AG04449 (cell line): ENCODE measurements at regions of chr11 and their contacts with region 1.

Region 1: DNA sequence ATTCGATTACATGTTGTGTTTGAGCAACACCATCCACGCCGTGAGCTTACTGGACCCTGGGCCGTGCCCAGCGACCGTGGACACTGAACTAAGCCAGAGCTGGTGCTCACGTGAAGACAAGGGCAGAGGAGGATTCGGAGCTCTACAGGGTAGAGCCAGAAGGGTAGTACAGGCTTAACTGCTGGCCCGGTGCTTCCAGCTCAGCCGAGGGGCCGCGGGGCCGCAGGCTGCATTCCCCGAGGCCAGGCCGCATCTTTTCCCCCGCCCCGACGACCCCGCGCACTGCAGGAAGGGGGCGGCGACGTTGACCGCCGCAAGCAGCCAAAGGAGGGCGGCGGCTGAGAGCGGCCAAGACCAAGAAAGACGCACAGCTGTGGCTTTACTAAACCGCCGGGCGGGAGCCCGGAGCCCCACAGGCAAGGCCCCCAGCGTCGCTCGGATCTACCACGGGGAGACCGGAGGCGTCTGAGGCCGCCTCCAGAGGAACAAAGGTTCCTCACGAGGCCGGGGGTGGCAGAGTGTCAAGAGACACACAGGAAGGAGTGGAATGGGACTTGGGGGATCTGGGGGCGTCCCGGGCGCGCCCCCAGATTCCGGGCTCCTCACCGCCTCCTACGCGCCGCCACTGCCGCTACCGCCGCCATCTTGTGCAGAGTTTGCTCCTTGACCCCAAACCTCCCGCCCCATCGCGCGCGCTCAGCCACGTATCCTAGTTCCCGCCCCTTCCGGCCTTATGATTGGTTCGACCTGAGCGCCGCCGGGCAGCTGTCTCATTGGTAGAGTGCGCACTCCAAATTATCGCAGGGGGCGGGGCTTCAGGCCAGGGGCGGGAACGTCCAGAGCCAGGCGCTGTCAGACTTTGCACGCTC is at the start of gene GANAB:
- DNase-seq: peak; percentile 87
- H3K4me3 ChIP-seq: peak within 1 kb of the TSS; percentile 91
- CTCF ChIP-seq: no peak

Region 2: DNA sequence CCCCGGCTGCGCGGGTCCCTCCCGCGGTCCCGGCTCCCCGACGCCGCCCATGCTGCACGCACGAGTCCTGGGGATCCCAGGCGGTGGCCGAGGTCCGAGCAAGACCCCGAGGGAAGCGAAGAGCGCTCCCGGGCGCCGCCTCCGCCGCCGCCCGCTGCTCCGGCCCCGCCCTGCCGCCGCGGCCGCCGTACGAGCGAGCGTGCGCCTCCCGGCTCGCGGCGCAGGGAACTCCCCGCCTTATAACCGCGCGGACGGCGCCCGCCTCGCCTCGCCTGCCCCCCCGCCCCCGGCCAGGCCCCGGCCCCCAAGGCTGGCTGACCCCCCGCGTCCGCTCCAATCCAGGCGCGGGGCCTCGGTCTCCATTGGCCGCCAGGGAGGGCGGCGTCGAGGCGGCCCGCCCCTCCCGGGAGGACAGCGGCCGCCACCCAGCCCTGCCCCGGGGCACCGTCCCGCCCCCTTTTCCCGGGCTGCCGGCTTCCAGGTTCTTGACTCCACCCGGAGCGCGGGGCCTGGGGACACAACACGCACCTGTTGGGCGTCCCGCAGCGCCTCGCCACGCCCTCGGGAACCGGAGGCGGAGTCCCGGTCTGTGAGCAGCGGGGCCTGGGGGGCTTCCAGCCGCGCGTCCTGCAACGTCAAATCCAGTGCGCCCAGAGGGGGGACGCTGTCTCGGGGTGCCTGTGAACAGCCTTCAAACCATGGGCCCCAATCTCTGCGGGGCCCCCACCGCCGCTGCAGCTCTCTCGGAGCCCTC is 754.7 kb before region 1 on chr11 and contains the start of gene FADS3:
- CTCF ChIA-PET with region 1: no interaction called
- POLR2A ChIA-PET with region 1: no interaction called
- DNase-seq: no peak
- H3K4me3 ChIP-seq: peak within 1 kb of the TSS; percentile 90
- CTCF ChIP-seq: no peak

Region 3: DNA sequence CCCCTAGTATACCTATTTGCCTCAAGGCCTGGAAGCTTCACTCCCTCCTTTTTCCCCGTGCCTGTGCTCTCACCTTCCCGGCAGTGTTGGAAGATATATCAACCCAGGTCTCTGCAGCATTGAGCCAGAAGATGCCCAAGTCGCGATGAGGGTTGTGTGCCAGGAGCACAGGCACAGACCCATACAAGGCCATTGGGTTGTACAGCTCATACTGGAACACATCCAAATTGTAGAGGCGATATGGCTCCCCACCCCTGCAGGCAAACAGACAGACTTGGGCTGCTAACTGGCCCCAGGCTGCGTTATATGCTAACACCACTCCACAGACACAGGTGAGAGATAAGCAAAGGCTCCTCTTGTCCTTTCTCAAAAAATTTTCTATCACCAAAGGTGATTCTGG is 13.7 kb before region 1 on chr11:
- CTCF ChIA-PET with region 1: interaction called, 11 read pairs
- POLR2A ChIA-PET with region 1: interaction called, 3 read pairs
- DNase-seq: no peak
- H3K4me3 ChIP-seq: no peak overlapping the region
- CTCF ChIP-seq: no peak

Region 4: GRCh38 chr11:62922658-62923431 is 276.7 kb after region 1 on chr11:
- CTCF ChIA-PET with region 1: no interaction called
- POLR2A ChIA-PET with region 1: no interaction called
- DNase-seq: no peak
- H3K4me3 ChIP-seq: no peak overlapping the region; the same call in 1 of the 2 replicates
- CTCF ChIP-seq: peak; percentile 53